OCI-LY7 (cell line): ENCODE measurements at regions of chr16 and their contacts with region 1.

Region 1: DNA sequence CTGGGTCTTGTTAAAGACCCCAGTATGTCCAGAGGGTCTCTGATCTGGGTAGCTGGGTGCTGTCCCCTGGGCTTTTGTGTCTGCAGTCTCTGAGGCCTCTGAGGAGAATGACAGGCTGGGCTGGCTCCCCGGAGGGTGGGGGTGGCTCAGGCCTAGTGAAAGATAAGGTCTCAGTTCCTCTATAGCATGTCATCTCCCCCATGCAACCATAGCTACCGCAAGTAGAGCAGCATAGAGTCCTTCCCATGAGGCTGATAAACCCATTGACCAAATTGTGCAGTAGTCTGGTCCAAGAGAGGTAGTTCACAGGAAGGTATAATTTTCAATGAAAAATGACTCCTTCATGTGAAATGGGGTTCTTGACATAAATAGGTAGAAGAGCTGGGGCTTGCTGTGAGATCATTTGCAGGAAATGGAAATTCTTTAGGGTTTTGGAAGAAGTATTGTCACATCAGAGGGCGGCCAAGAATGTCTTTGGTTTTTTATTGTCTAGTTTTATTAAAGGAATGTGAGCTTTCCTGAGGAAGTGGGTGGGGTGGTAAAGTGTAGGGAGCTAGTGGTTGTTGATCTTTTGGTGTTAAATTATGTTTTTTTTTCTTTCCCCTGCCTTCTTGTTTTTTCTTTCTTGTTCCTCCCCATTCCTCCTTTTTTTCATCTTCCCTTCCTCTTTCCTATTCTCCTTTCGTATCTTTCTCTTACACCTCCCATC is 21.0 kb downstream of the SLC7A6OS start:
- DNase-seq: peak; percentile 80
- H3K4me3 ChIP-seq: no peak overlapping the region
- H3K27ac ChIP-seq: peak overlapping the region; percentile 66
- H3K4me1 ChIP-seq: peaks cover 72% of the 10 kb centered on the region
- CTCF ChIP-seq: no peak

Region 2: GRCh38 chr16:68251832-68252231 is 37.9 kb before region 1 on chr16:
- CTCF ChIA-PET with region 1: no interaction called
- POLR2A ChIA-PET with region 1: interaction called, 14 read pairs
- intact Hi-C with region 1: no loop called
- DNase-seq: peak; percentile 92
- H3K4me3 ChIP-seq: peak overlapping the region; percentile 38
- H3K27ac ChIP-seq: peak overlapping the region; percentile 91
- H3K4me1 ChIP-seq: peaks cover 66% of the 10 kb centered on the region
- CTCF ChIP-seq: 0 out of 2 replicates have a peak, but pooled peaks have one; percentile 15

Region 3: DNA sequence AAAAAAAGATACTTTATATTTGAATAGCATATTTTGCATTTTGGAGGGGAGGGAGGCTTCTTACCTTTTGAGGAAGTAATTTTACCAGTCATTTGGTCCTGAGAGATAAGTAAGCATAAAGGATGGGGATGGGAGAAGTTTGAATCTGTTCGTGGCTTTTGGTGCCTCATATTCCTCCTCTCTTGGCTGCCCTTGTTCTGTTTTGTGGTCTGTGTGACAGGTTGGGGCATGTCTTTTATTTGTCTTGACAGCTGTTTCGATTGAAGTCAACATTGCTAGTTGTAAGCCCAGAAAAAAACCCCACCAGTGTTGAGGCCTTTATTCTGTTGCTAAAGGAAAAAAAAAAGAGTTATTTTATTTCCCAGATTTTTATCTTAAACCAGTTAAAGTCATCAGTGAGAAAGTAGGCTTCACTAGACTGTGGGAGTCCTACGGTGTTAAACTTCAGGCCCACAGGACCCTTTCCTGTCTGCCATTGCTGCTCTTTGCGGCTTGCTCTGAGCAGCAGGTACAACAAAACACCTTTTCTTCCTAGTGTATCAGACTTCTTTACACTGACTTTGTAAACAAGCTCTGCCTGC is 14.1 kb before region 1 on chr16:
- CTCF ChIA-PET with region 1: interaction called, 6 read pairs
- POLR2A ChIA-PET with region 1: interaction called, 17 read pairs
- intact Hi-C with region 1: no loop called
- DNase-seq: peak; percentile 71
- H3K4me3 ChIP-seq: peak overlapping the region; percentile 9
- H3K27ac ChIP-seq: peak overlapping the region; percentile 79
- H3K4me1 ChIP-seq: peaks cover 73% of the 10 kb centered on the region
- CTCF ChIP-seq: no peak